A549 (cell line): ENCODE measurements at regions of chr3 and their contacts with region 1.

Region 1: DNA sequence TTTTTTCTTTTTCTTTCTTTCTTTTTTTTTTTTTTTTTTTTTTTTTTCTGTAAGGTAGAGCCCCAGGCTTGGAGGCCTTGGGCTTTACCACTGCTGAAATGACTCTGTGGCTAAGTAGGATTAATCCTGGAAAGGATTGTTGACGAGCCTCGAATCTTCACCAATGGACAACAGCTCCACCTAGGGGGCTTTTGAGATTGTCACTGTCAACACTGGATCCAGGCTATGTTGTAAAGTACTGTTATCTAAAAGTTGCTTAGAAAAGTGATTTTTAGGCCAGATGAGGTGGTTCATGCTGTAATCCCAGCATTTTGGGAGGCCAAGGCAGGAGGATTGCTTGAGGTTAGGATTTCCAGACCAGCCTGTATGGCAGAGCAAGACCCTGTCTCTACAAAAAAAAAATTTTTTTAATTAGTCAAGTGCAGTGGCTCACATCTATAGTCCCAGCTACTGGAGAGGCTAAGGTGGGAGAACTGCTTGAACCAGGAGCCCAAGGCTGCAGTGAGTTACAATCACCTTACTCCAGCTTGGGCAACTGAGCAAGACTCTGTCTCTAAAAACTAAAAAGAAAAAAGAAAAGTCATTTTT is 41.6 kb downstream of the KLHL18 start:
- DNase-seq: peak; percentile 50 to 58
- ATAC-seq: peak; percentile 88 to 94
- H3K4me3 ChIP-seq: no peak overlapping the region
- H3K27ac ChIP-seq: no peak overlapping the region
- H3K4me1 ChIP-seq: peaks cover 5% of the 10 kb centered on the region; the same call in 1 of the 3 replicates
- CTCF ChIP-seq: peak; percentile 64
- EP300 ChIP-seq: no peak
- POLR2A ChIP-seq: no peak
- RAD21 ChIP-seq: peak; percentile 69 to 75

Region 2: GRCh38 chr3:47339951-47340350 is 15.6 kb after region 1 on chr3:
- CTCF ChIA-PET with region 1: interaction called, 18 read pairs
- POLR2A ChIA-PET with region 1: no interaction called
- DNase-seq: no peak
- ATAC-seq: no peak
- H3K4me3 ChIP-seq: no peak overlapping the region
- H3K27ac ChIP-seq: no peak overlapping the region
- H3K4me1 ChIP-seq: no peaks in the 10 kb centered on the region
- CTCF ChIP-seq: no peak
- EP300 ChIP-seq: no peak
- POLR2A ChIP-seq: no peak
- RAD21 ChIP-seq: no peak